ENCODE measurements at regions of chr4 and their contacts with region 1.

Region 1: DNA sequence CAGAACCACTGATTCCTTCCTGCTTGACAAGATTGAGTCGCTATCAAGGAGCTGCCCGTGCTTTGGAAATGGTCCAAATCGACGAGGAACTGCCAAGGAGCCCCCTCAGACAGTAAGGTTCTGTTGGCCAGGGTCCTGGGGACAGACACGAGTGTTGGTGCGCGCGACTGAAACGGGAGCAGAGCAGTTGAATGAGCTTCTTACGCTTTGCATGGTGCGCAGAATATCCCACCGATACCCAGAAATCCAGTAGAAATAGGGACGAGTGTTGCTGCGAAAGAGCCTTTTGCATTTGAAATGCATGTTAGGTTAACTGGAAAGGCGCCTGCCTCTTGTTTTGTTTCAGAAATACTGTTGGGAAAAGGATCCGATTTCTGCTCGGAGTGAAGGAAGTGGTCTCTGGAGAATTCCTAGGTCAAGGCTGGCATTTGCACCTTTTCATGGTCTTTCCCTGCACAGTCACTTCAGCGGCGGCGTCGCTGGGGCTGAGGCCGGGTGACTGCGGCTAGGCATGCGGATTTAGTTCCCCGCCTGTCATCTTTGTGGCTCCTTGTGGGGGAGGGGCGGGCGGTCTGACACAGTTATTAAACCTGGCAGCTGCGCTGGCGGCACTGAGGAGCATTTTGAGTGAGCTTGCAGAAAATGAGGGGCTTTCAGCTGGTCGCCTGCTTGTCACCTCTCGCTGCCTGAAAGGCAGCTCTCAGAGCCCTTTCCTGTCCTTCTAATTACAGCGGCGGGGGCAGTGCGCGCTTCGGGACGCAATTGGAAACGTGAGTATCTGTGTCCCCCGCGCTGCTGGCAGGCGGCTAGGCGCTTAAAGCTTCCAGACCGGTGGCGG is 51.5 kb upstream of the TRIM2 start:
- DNase-seq: peak in 1 of 2 experiments; percentile 71
- H3K4me3 ChIP-seq: peak overlapping the region; percentile 49 to 66 (median 57)
- H3K27ac ChIP-seq: no peak overlapping the region
- H3K4me1 ChIP-seq: peaks cover 7 to 18% (median 14%) of the 10 kb centered on the region in 4 experiments
- H3K27me3 ChIP-seq: peaks cover 3 to 41% (median 40%) of the 10 kb centered on the region in 4 experiments
- CTCF ChIP-seq: no peak
- EP300 ChIP-seq: no peak
- POLR2A ChIP-seq: no peak
- RAD21 ChIP-seq: no peak

Region 2: GRCh38 chr4:153114771-153115321 is 37.9 kb before region 1 on chr4:
- CTCF ChIA-PET with region 1: no interaction called
- POLR2A ChIA-PET with region 1: no interaction called
- DNase-seq: no peak
- H3K4me3 ChIP-seq: no peak overlapping the region
- H3K27ac ChIP-seq: no peak overlapping the region
- H3K4me1 ChIP-seq: no peaks in the 10 kb centered on the region; a peak in 1 of 7 replicates
- H3K27me3 ChIP-seq: no peaks in the 10 kb centered on the region; a peak in 1 of 7 replicates
- CTCF ChIP-seq: no peak
- EP300 ChIP-seq: no peak
- POLR2A ChIP-seq: no peak
- RAD21 ChIP-seq: no peak

Region 3: DNA sequence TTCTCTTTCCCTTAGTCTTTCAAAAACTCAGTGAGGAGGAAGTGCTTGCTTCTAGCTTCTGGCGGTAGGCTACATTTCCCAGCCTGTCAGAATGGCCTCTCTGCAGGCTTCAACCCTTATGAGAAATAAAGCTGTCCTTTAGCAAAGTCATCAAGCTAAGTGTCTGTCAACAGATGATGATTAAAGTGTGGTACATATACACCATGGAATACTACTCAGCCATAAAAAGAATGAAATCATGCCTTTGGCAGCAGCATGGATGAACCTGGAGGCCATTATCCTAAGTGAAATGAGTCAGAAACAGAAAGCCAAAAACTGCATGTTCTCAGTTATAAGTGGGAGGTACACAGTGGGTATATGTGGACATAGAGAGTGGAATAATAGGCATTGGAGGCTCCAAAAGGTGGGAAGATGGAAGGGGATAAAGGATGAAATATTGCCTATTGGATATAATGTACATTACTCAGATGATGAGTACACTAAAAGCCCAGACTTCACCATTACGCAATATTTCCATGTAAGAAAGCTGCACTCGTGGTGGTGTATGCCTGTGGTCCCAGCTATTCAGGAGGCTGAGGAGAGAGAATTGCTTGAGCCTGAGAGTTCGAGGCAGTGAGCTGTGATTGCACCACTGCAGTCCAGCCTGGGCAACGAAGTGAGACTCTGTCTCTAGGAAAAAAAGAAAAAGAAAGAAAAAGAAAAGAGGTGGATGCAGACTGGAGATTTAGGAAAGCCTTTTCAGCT is 59.4 kb after region 1 on chr4:
- CTCF ChIA-PET with region 1: interaction called, 11 read pairs
- POLR2A ChIA-PET with region 1: no interaction called
- DNase-seq: no peak
- H3K4me3 ChIP-seq: no peak overlapping the region
- H3K27ac ChIP-seq: no peak overlapping the region
- H3K4me1 ChIP-seq: peaks cover under 1 to 12% (median 8%) of the 10 kb centered on the region in 4 experiments
- H3K27me3 ChIP-seq: no peaks in the 10 kb centered on the region
- CTCF ChIP-seq: no peak
- EP300 ChIP-seq: no peak
- POLR2A ChIP-seq: no peak
- RAD21 ChIP-seq: no peak

Region 4: GRCh38 chr4:153238135-153238919 is 85.6 kb after region 1 on chr4:
- CTCF ChIA-PET with region 1: no interaction called
- POLR2A ChIA-PET with region 1: no interaction called
- DNase-seq: no peak
- H3K4me3 ChIP-seq: no peak overlapping the region
- H3K27ac ChIP-seq: no peak overlapping the region
- H3K4me1 ChIP-seq: peaks cover 0 to 15% (median 12%) of the 10 kb centered on the region in 4 experiments; a peak in 6 of 7 replicates
- H3K27me3 ChIP-seq: no peaks in the 10 kb centered on the region
- CTCF ChIP-seq: no peak
- EP300 ChIP-seq: no peak
- POLR2A ChIP-seq: no peak
- RAD21 ChIP-seq: no peak

Measured in H1 (cell line).